ENCODE measurements at regions of chr4 and their contacts with region 1.

Region 1: DNA sequence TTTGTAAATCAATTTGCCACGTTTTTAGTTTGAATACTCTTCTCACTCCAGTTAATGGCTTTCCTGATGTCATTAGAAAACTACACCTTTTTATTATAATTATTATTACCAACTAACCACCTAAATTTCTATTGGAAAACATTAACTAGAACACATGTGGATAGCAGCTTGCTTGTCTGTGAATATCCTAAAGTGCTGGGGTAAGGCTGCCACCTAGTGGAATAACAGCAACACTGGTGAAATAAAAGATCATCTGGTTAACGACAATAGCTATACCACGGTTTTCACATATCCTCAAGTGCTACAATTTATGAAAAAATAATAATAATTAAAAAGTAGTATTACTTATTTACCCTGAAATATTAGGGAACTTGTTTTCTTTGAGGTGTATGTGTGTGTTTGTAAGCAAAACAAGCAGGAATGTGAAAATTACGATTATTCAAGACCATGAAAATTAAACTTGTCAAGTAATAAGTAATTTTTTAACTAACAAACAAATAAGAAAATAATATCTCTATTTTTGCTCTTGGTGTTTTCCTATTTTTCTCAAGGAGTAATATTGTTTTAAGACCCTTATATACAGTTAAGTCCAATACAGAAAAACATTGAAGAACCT is 130.1 kb upstream of the TECRL start:
- DNase-seq: peak in 1 of 2 donors; percentile 62
- H3K4me3 ChIP-seq: no peak overlapping the region
- H3K27ac ChIP-seq: no peak overlapping the region
- H3K4me1 ChIP-seq: no peaks in the 10 kb centered on the region
- H3K27me3 ChIP-seq: no peaks in the 10 kb centered on the region
- CTCF ChIP-seq: peak in 2 of 3 experiments; percentile 46 to 67

Region 2: DNA sequence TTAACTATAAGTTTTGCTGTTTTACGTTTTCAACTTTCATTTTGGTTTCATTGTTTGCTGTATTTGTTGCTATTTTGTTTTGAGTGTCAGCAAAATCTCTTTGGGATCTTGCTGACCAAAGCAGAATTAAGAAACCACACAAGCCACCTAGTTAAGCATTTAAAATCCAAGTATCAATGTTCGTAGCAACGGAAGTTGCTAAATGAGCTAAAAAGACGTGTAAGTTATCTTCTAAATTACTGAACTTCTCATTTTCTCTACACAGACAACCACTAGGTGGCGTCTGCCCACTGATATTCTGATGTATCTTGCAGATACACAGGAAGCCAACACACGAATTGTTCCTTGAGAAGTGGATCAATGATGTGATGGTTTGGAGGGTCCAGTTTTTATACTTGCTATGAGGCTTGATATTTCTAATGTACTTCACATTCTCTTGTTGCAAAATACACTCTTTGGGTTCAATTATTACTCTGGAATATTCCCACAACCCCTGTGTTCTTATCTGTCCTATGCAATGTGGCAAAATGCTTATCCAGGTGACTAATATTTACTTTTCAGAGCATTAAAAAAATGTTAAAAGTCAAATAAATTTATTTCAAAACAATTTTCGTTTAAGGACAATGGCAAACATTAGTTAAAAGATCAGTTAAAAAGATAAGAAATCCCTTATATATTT is 380.6 kb before region 1 on chr4:
- intact Hi-C with region 1: loop called (anchors 5 kb)
- DNase-seq: no peak
- H3K4me3 ChIP-seq: no peak overlapping the region
- H3K27ac ChIP-seq: no peak overlapping the region
- H3K4me1 ChIP-seq: no peaks in the 10 kb centered on the region
- H3K27me3 ChIP-seq: no peaks in the 10 kb centered on the region
- CTCF ChIP-seq: peak in 2 of 3 experiments; percentile 25 to 55